ENCODE measurements at regions of chr18 and their contacts with region 1.

Region 1: GRCh38 chr18:51153659-51154371 is 43.7 kb downstream of the MEX3C start:
- DNase-seq: peak; percentile 51
- H3K4me3 Mint-ChIP-seq: peak overlapping the region; percentile 67
- H3K27ac Mint-ChIP-seq: peak overlapping the region; percentile 92
- H3K4me1 Mint-ChIP-seq: peaks cover 45% of the 10 kb centered on the region
- H3K27me3 Mint-ChIP-seq: no peaks in the 10 kb centered on the region

Region 2: DNA sequence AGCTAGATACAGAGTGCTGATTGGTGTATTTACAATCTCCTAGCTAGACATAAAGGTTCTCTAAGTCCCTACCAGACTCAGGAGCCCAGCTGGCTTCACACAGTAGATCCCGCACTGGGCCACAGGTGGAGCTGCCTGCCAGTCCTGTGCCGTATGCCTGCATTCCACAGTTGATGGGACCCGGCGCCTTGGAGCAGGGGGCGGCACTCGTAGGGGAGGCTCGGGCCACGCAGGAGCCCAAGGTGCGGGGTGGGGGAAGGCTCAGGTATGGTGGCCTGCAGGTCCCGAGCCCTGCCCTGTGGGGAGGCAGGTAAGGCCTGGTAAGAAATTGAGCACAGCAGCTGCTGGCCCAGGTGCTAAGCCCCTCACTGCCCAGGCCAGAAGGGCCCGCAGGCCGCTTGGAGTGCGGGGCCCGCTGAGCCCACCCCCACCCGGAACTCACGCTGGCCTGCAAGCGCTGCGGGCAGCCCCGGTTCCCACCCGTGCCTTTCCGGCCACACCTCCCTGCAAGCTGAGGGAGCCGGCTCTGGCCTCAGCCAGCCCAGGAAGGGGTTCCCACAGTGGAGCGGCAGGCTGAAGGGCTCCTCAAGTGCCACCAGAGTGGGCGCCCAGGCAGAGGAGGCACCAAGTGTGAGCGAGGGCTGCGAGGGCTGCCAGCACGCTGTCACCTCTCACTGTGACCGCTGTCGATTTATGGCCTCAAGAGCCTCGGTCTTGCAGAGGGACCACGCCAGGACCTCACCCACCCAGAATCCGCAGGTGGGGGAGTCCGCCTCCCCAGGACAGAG is 32.8 kb before region 1 on chr18:
- CTCF ChIA-PET with region 1: no interaction called
- POLR2A ChIA-PET with region 1: no interaction called
- DNase-seq: no peak
- H3K4me3 Mint-ChIP-seq: no peak overlapping the region
- H3K27ac Mint-ChIP-seq: no peak overlapping the region
- H3K4me1 Mint-ChIP-seq: no peaks in the 10 kb centered on the region
- H3K27me3 Mint-ChIP-seq: no peaks in the 10 kb centered on the region

Region 3: DNA sequence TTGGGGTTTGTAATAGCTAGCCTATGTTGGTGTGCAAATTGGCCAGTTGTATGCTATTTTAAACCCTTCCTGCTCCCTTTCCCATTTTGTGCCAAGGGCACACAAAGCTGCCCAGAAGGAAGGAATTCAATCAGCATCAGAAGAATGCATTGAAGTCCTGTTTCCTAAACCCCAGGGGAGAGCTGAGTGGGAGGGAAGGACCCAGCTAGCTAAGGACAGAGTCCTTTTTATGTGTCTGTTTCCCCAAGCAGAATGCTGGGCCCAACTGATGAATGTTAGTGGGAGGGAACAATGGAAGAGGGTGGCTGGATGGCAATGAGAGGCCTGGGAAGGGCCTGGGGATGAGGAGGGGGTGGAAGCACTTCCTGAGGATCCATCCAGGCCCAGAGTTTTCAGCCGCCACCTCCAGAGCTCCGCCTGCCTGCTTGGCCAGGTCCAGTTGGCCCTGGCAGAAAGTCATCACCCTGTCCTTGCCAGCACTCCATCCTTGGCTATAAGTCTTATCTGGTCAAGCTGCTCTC is 11.0 kb after region 1 on chr18:
- CTCF ChIA-PET with region 1: interaction called, 5 read pairs
- POLR2A ChIA-PET with region 1: interaction called, 20 read pairs
- DNase-seq: no peak
- H3K4me3 Mint-ChIP-seq: no peak overlapping the region
- H3K27ac Mint-ChIP-seq: peak overlapping the region; percentile 34
- H3K4me1 Mint-ChIP-seq: peaks cover 55% of the 10 kb centered on the region
- H3K27me3 Mint-ChIP-seq: no peaks in the 10 kb centered on the region

Region 4: GRCh38 chr18:51171223-51171622 is 17.4 kb after region 1 on chr18:
- CTCF ChIA-PET with region 1: interaction called, 5 read pairs
- POLR2A ChIA-PET with region 1: interaction called, 13 read pairs
- DNase-seq: no peak
- H3K4me3 Mint-ChIP-seq: no peak overlapping the region
- H3K27ac Mint-ChIP-seq: peak overlapping the region; percentile 82
- H3K4me1 Mint-ChIP-seq: peaks cover 60% of the 10 kb centered on the region
- H3K27me3 Mint-ChIP-seq: no peaks in the 10 kb centered on the region

Region 5: DNA sequence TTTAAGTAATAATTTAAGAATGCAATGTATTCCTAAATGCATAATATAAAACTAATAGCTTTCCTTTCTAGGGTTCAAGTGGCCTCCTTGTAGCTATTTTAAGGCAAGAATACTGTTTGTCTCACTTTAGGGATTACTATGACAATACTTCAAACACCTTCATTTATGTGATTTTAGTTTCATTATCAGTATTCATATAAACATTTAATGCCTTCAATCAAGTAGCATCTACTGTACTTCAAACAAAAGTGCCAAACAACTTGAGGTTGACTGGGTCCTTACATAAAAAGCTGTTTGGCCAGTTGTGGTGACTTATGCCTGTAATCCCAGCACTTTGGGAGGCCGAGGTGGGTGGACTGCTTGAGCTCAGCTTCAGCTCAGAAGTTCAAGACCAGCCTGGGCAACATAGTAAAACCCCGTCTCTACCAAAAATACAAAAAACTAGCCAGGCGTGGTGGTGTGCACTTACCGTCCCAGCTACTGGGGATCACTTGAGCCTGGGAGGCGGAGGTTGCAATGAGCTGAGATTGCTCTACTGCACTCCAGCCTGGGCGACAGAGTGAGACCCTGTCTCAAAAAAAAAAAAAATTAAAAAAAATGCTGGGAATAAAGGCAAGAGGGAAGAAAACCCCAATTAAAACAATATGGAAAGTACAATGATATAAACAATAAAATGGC is 34.3 kb after region 1 on chr18:
- CTCF ChIA-PET with region 1: interaction called, 9 read pairs
- POLR2A ChIA-PET with region 1: interaction called, 19 read pairs
- DNase-seq: no peak
- H3K4me3 Mint-ChIP-seq: peak overlapping the region; percentile 33
- H3K27ac Mint-ChIP-seq: no peak overlapping the region
- H3K4me1 Mint-ChIP-seq: peaks cover 70% of the 10 kb centered on the region
- H3K27me3 Mint-ChIP-seq: no peaks in the 10 kb centered on the region